Naive thymus-derived CD4-positive, alpha-beta T cell (primary cell): ENCODE measurements at regions of chr17 and their contacts with region 1.

Region 1: GRCh38 chr17:58517734-58518609 is 3.5 kb upstream of the MTMR4 start:
- DNase-seq: peak; percentile 92 to 100 (median 100)
- ATAC-seq: peak; percentile 89
- H3K4me3 ChIP-seq: peak overlapping the region; percentile 99
- H3K4me3 Mint-ChIP-seq: peak overlapping the region; percentile 92 to 98 (median 96)
- H3K27ac ChIP-seq: peak overlapping the region; percentile 84
- H3K27ac Mint-ChIP-seq: peak overlapping the region; percentile 82 to 97 (median 95)
- H3K4me1 ChIP-seq: peaks cover 20 to 28% of the 10 kb centered on the region in 2 donors
- H3K4me1 Mint-ChIP-seq: peaks cover 30 to 49% (median 46%) of the 10 kb centered on the region in 7 donors
- H3K27me3 ChIP-seq: no peaks in the 10 kb centered on the region
- H3K27me3 Mint-ChIP-seq: peaks cover 0 to 5% (median 0%) of the 10 kb centered on the region in 5 donors

Region 2: DNA sequence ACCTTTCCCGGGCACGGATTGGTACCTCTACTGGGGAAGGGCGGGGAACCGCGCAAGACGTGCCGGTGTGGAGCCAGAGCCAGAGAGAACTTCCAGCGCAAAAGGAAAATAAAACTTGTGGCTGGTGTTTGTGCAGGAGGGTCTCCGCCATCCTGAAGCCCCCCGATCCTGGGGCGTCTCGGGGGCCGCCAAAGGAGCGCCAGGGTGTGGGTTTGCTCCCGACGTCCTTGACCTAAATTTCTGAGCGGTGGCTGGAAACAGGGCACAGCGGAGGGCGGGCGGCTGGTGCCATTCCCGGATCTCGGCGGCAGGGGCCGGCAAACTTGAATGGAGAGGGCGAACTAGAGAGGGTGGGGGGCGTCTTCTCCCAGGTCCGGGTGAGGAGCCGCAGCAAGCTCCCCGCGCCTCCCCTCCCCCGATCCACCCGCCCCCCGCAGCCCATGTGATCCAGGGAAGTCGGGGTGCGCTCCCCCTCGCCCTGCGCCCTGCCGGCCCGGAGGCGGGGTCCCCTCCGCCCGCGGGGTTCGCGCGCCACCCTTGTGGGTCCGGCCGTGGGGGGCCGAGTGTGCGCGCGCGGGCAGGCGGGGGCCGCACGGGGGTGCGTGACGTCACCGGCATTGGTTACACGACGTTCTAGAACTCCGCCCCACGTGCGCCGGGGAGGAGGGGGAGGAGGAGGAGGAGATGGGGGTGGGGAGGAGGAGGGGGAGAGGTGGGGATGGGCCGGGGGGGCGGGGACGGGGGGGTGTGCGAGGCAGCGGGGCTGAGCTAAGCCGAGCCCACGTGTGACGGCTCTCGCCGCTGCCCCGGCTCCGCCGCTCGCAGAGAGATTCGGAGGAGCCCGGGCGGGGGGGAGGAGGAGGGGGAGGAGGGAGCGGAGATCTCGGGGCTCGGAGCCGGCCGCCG is 1261.9 kb before region 1 on chr17 and contains the start of gene MSI2:
- CTCF ChIA-PET with region 1: no interaction called
- POLR2A ChIA-PET with region 1: no interaction called
- intact Hi-C with region 1: loop called (anchors 5 kb)
- DNase-seq: peak; percentile 80 to 93 (median 85)
- ATAC-seq: peak; percentile 89
- H3K4me3 ChIP-seq: peak within 1 kb of the TSS; percentile 87
- H3K4me3 Mint-ChIP-seq: peak within 1 kb of the TSS; percentile 90 to 100 (median 96)
- H3K27ac ChIP-seq: peak within 1 kb of the TSS; percentile 83
- H3K27ac Mint-ChIP-seq: peak within 1 kb of the TSS; percentile 85 to 98 (median 91)
- H3K4me1 ChIP-seq: peaks cover 13 to 28% of the 10 kb centered on the region in 2 donors
- H3K4me1 Mint-ChIP-seq: peaks cover 21 to 57% (median 46%) of the 10 kb centered on the region in 7 donors
- H3K27me3 ChIP-seq: no peaks in the 10 kb centered on the region
- H3K27me3 Mint-ChIP-seq: peaks cover 0 to 4% (median 0%) of the 10 kb centered on the region in 5 donors
- total RNA-seq, gene MSI2: 111 to 169 (median 150) TPM

Region 3: GRCh38 chr17:58317421-58318064 is 200.4 kb before region 1 on chr17:
- CTCF ChIA-PET with region 1: no interaction called
- POLR2A ChIA-PET with region 1: interaction called, 7 read pairs
- intact Hi-C with region 1: loop called in 1 of 2 experiments (anchors 1 kb)
- DNase-seq: peak; percentile 44 to 83 (median 77)
- ATAC-seq: peak; percentile 95
- H3K4me3 ChIP-seq: no peak overlapping the region
- H3K4me3 Mint-ChIP-seq: peak overlapping the region in 4 of 10 donors; percentile 4 to 58 (median 28)
- H3K27ac ChIP-seq: peak overlapping the region; percentile 47
- H3K27ac Mint-ChIP-seq: peak overlapping the region; percentile 58 to 94 (median 84)
- H3K4me1 ChIP-seq: peaks cover 11 to 12% of the 10 kb centered on the region in 2 donors
- H3K4me1 Mint-ChIP-seq: peaks cover 10 to 26% (median 13%) of the 10 kb centered on the region in 7 donors
- H3K27me3 ChIP-seq: no peaks in the 10 kb centered on the region
- H3K27me3 Mint-ChIP-seq: no peaks in the 10 kb centered on the region

Region 4: DNA sequence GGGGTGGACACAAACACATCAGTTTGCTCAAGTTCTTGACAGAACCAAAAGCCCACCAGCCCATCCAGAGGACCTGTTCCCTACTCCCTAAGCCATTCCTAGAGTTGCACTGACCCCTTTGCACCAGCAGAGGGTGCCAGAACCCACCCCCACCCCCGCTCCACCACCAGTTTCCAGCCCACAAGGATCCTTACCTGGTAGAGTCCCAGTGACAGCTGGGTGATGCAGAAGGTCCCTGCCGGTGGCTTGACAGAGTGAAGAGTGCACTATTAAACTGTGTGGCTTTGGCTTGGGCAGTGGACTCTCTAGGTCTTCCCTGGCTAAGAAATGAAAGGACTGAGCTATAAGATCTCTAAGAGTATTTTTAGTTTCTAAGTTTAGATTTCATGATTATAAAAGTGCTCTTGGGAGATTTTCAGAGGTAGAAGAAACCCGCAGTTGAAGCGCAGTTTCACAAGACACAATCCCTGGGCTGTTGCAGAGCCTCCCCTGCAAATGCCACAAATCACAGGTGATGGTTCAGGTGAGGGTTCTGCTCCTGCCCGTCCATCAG is 69.8 kb after region 1 on chr17:
- CTCF ChIA-PET with region 1: interaction called, 12 read pairs
- POLR2A ChIA-PET with region 1: interaction called, 6 read pairs
- intact Hi-C with region 1: loop called (anchors 1 to 2 kb)
- DNase-seq: peak; percentile 16 to 60 (median 46)
- ATAC-seq: peak; percentile 86
- H3K4me3 ChIP-seq: no peak overlapping the region
- H3K4me3 Mint-ChIP-seq: no peak overlapping the region
- H3K27ac ChIP-seq: no peak overlapping the region
- H3K27ac Mint-ChIP-seq: no peak overlapping the region
- H3K4me1 ChIP-seq: no peaks in the 10 kb centered on the region
- H3K4me1 Mint-ChIP-seq: peaks cover 0 to 2% (median 0%) of the 10 kb centered on the region in 7 donors
- H3K27me3 ChIP-seq: no peaks in the 10 kb centered on the region
- H3K27me3 Mint-ChIP-seq: peaks cover 0 to 5% (median 3%) of the 10 kb centered on the region in 5 donors

Region 5: GRCh38 chr17:58601976-58602375 is 84.0 kb after region 1 on chr17:
- CTCF ChIA-PET with region 1: no interaction called
- POLR2A ChIA-PET with region 1: no interaction called
- intact Hi-C with region 1: no loop called
- DNase-seq: no peak
- ATAC-seq: no peak
- H3K4me3 ChIP-seq: no peak overlapping the region
- H3K4me3 Mint-ChIP-seq: no peak overlapping the region
- H3K27ac ChIP-seq: no peak overlapping the region
- H3K27ac Mint-ChIP-seq: no peak overlapping the region
- H3K4me1 ChIP-seq: no peaks in the 10 kb centered on the region
- H3K4me1 Mint-ChIP-seq: peaks cover 0 to 7% (median 0%) of the 10 kb centered on the region in 7 donors
- H3K27me3 ChIP-seq: no peaks in the 10 kb centered on the region
- H3K27me3 Mint-ChIP-seq: no peaks in the 10 kb centered on the region

Region 6: GRCh38 chr17:59106463-59107305 is 588.7 kb after region 1 on chr17 and contains the start of gene TRIM37:
- CTCF ChIA-PET with region 1: no interaction called
- POLR2A ChIA-PET with region 1: no interaction called
- intact Hi-C with region 1: loop called (anchors 1 kb)
- DNase-seq: peak; percentile 96 to 100 (median 99)
- ATAC-seq: peak; percentile 98
- H3K4me3 ChIP-seq: peak within 1 kb of the TSS; percentile 69
- H3K4me3 Mint-ChIP-seq: peak within 1 kb of the TSS; percentile 80 to 97 (median 94)
- H3K27ac ChIP-seq: peak within 1 kb of the TSS; percentile 83
- H3K27ac Mint-ChIP-seq: peak within 1 kb of the TSS; percentile 63 to 98 (median 90)
- H3K4me1 ChIP-seq: peaks cover 11 to 26% of the 10 kb centered on the region in 2 donors
- H3K4me1 Mint-ChIP-seq: peaks cover 15 to 57% (median 39%) of the 10 kb centered on the region in 7 donors
- H3K27me3 ChIP-seq: no peaks in the 10 kb centered on the region
- H3K27me3 Mint-ChIP-seq: no peaks in the 10 kb centered on the region
- total RNA-seq, gene TRIM37: 13.1 to 25.2 (median 22.4) TPM

Region 7: GRCh38 chr17:59707114-59707970 is 1189.4 kb after region 1 on chr17 and contains the starts of genes PTRH2 and VMP1:
- CTCF ChIA-PET with region 1: no interaction called
- POLR2A ChIA-PET with region 1: no interaction called
- intact Hi-C with region 1: loop called in 1 of 2 experiments (anchors 5 kb)
- DNase-seq: peak; percentile 72 to 94 (median 83)
- ATAC-seq: peak; percentile 96
- H3K4me3 ChIP-seq: peak within 1 kb of the TSS; percentile 90
- H3K4me3 Mint-ChIP-seq: peak within 1 kb of the TSS; percentile 97 to 100 (median 99)
- H3K27ac ChIP-seq: peak within 1 kb of the TSS; percentile 90
- H3K27ac Mint-ChIP-seq: peak within 1 kb of the TSS; percentile 96 to 100 (median 99)
- H3K4me1 ChIP-seq: peaks cover 26 to 28% of the 10 kb centered on the region in 2 donors
- H3K4me1 Mint-ChIP-seq: peaks cover 39 to 86% (median 68%) of the 10 kb centered on the region in 7 donors
- H3K27me3 ChIP-seq: no peaks in the 10 kb centered on the region
- H3K27me3 Mint-ChIP-seq: no peaks in the 10 kb centered on the region
- total RNA-seq, gene PTRH2: 6.1 to 24.1 (median 15.0) TPM
- total RNA-seq, gene VMP1: 70.3 to 370 (median 82.5) TPM